T-cell (primary cell): ENCODE measurements at regions of chr1 and their contacts with region 1.

Region 1: GRCh38 chr1:36239941-36240637 is 15.8 kb downstream of the THRAP3 start:
- DNase-seq: no peak
- ATAC-seq: no peak
- H3K4me3 ChIP-seq: no peak overlapping the region
- H3K4me3 Mint-ChIP-seq: no peak overlapping the region
- H3K27ac ChIP-seq: no peak overlapping the region
- H3K27ac Mint-ChIP-seq: no peak overlapping the region
- H3K4me1 ChIP-seq: peaks cover 0 to 30% of the 10 kb centered on the region in 2 experiments
- H3K4me1 Mint-ChIP-seq: peaks cover 45 to 59% (median 57%) of the 10 kb centered on the region in 3 donors
- H3K27me3 ChIP-seq: no peaks in the 10 kb centered on the region
- H3K27me3 Mint-ChIP-seq: no peaks in the 10 kb centered on the region

Region 2: GRCh38 chr1:36040238-36040637 is 199.9 kb before region 1 on chr1:
- CTCF ChIA-PET with region 1: no interaction called
- POLR2A ChIA-PET with region 1: no interaction called
- DNase-seq: no peak
- ATAC-seq: no peak
- H3K4me3 ChIP-seq: no peak overlapping the region
- H3K4me3 Mint-ChIP-seq: no peak overlapping the region
- H3K27ac ChIP-seq: no peak overlapping the region
- H3K27ac Mint-ChIP-seq: no peak overlapping the region
- H3K4me1 ChIP-seq: no peaks in the 10 kb centered on the region
- H3K4me1 Mint-ChIP-seq: no peaks in the 10 kb centered on the region
- H3K27me3 ChIP-seq: no peaks in the 10 kb centered on the region
- H3K27me3 Mint-ChIP-seq: no peaks in the 10 kb centered on the region

Region 3: GRCh38 chr1:36269408-36269838 is 29.3 kb after region 1 on chr1:
- CTCF ChIA-PET with region 1: no interaction called
- POLR2A ChIA-PET with region 1: no interaction called
- DNase-seq: no peak
- ATAC-seq: no peak
- H3K4me3 ChIP-seq: no peak overlapping the region
- H3K4me3 Mint-ChIP-seq: no peak overlapping the region
- H3K27ac ChIP-seq: no peak overlapping the region
- H3K27ac Mint-ChIP-seq: no peak overlapping the region
- H3K4me1 ChIP-seq: no peaks in the 10 kb centered on the region
- H3K4me1 Mint-ChIP-seq: peaks cover 7 to 22% (median 21%) of the 10 kb centered on the region in 3 donors
- H3K27me3 ChIP-seq: no peaks in the 10 kb centered on the region
- H3K27me3 Mint-ChIP-seq: no peaks in the 10 kb centered on the region

Region 4: GRCh38 chr1:36279789-36280296 is 39.8 kb after region 1 on chr1:
- CTCF ChIA-PET with region 1: interaction called, 3 to 11 read pairs
- POLR2A ChIA-PET with region 1: interaction called in 1 of 2 experiments, 4 read pairs
- DNase-seq: no peak
- ATAC-seq: no peak
- H3K4me3 ChIP-seq: no peak overlapping the region
- H3K4me3 Mint-ChIP-seq: no peak overlapping the region
- H3K27ac ChIP-seq: peak overlapping the region; percentile 1
- H3K27ac Mint-ChIP-seq: peak overlapping the region; percentile 65 to 83
- H3K4me1 ChIP-seq: no peaks in the 10 kb centered on the region
- H3K4me1 Mint-ChIP-seq: peaks cover 15 to 25% (median 24%) of the 10 kb centered on the region in 3 donors
- H3K27me3 ChIP-seq: no peaks in the 10 kb centered on the region
- H3K27me3 Mint-ChIP-seq: no peaks in the 10 kb centered on the region